Ovary (tissue), 10 donors: ENCODE measurements at regions of chr10 and their contacts with region 1.

Region 1: DNA sequence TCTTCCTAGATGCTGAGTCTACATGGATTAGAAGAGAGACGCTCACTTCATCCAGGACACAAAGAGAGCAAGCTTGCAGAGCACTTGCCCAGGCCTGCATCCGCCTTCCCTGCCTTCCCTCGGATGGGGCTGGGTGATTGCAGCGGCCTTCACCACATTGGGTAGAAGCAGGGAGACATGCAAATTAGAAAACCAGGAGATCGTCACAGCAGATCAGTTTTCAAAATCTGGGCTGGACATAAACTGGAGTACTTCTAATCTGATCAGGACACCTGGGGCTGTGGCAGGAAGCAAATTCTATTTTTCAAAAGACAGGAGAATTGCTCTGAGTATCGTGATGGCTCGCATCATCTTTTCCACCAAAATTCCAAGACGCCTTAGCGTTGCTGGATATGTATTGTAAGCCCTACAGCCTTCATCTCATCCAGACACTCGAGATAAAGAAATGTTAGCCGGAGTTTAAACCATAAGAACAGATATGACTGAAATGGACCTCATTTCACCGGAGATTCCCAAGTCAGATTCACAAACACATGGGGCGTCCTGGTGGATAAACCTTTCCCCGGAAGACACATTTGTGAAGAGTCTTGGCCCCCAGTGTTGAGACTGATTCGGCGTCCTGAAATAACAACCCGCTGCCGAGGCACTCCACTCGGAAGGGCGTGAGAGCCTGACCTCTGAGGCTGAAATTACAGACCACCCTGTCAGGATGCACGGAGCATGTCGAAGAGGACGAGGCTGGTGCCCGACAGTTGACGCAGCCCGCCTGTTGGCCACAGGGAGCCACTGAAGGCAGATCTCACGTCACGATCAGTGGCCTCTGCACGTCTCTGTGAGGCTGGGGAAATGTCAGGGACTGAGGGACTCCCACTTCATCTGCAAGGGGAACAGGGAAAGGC is 91.2 kb upstream of the PARD3 start:
- DNase-seq: no peak
- H3K4me3 ChIP-seq: no peak overlapping the region
- H3K27ac ChIP-seq: no peak overlapping the region
- H3K4me1 ChIP-seq: no peaks in the 10 kb centered on the region
- H3K27me3 ChIP-seq: no peaks in the 10 kb centered on the region
- CTCF ChIP-seq: no peak
- EP300 ChIP-seq: no peak
- POLR2A ChIP-seq: no peak

Region 2: DNA sequence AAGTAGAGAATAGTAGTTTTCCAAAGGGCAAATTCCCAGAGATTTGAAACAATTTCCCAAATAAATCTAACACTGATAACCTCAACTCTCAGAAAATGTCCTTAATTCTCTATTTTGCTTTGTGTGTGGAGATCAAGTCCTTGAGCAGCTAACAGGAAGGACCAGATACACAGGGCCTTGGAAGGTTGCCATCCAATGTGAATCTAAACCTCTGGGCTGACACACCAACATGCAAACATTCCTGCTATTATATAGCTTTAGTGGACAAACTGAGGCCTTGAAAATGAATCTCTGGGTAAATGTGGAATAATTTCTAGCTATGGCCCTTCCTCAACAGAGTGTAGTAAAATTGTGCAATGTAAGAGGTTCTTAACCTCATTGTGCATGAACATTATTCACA is 47.1 kb before region 1 on chr10:
- intact Hi-C with region 1: loop called in 1 of 4 experiments (anchors 5 kb)
- DNase-seq: no peak
- H3K4me3 ChIP-seq: no peak overlapping the region
- H3K27ac ChIP-seq: no peak overlapping the region
- H3K4me1 ChIP-seq: peaks cover 18% of the 10 kb centered on the region
- H3K27me3 ChIP-seq: no peaks in the 10 kb centered on the region
- CTCF ChIP-seq: no peak
- EP300 ChIP-seq: no peak
- POLR2A ChIP-seq: no peak

Region 3: DNA sequence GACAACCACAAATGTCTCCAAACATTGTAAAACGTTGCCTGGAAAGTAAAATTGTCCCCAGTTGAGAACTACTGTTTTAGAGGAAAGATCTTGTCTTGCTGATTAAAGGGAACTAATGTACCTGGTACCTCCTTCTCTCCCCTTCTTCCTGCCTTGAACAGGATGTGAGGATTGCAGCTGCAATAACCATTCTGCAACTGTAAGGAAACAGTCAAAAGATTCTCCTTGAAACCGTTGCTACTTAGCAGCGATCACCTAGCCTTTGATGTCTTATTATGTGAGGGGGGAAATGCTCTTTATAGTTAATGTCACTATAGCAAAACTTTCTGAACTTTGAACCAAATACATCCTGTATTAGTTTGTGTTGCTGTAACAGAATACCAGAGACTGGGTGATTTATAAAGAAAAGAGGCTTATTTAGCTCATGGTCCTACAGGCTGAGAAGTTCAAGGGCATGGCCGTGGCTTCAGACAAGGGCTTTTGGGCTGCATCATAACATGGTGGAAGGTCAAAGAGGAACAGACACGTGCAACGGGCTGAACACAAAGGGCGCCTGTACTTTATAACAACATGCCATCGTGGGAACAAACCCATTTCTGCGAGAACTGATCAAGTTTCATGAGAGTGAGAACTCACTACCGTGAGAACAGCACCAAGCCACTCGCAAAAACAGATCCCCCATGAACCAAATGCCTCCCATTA is 37.0 kb before region 1 on chr10:
- intact Hi-C with region 1: no loop called
- DNase-seq: no peak
- H3K4me3 ChIP-seq: no peak overlapping the region
- H3K27ac ChIP-seq: no peak overlapping the region
- H3K4me1 ChIP-seq: peaks cover 2% of the 10 kb centered on the region
- H3K27me3 ChIP-seq: no peaks in the 10 kb centered on the region
- CTCF ChIP-seq: no peak
- EP300 ChIP-seq: no peak
- POLR2A ChIP-seq: no peak